H1 (cell line): ENCODE measurements at regions of chr9 and their contacts with region 1.

Region 1: GRCh38 chr9:97237951-97238851 is 69.3 kb upstream of the CCDC180 start:
- DNase-seq: peak in 1 of 2 experiments; percentile 86
- H3K4me3 ChIP-seq: peak overlapping the region; percentile 76 to 83 (median 80)
- H3K27ac ChIP-seq: peak overlapping the region; percentile 80
- H3K4me1 ChIP-seq: peaks cover 0 to 7% (median 2%) of the 10 kb centered on the region in 4 experiments; a peak in 3 of 7 replicates
- H3K27me3 ChIP-seq: no peaks in the 10 kb centered on the region
- CTCF ChIP-seq: no peak
- EP300 ChIP-seq: no peak
- POLR2A ChIP-seq: peak in 1 of 2 experiments; percentile 86; a peak in 2 of 3 replicates
- RAD21 ChIP-seq: no peak

Region 2: GRCh38 chr9:97271292-97271691 is 33.1 kb after region 1 on chr9:
- CTCF ChIA-PET with region 1: interaction called, 3 read pairs
- POLR2A ChIA-PET with region 1: interaction called, 14 read pairs
- DNase-seq: peak in 1 of 2 experiments; percentile 68
- H3K4me3 ChIP-seq: peak overlapping the region in 2 of 4 experiments; percentile 29 to 47; a peak in 4 of 8 replicates
- H3K27ac ChIP-seq: no peak overlapping the region
- H3K4me1 ChIP-seq: peaks cover 2 to 5% (median 3%) of the 10 kb centered on the region in 4 experiments
- H3K27me3 ChIP-seq: no peaks in the 10 kb centered on the region
- CTCF ChIP-seq: no peak
- EP300 ChIP-seq: no peak
- POLR2A ChIP-seq: no peak
- RAD21 ChIP-seq: no peak

Region 3: DNA sequence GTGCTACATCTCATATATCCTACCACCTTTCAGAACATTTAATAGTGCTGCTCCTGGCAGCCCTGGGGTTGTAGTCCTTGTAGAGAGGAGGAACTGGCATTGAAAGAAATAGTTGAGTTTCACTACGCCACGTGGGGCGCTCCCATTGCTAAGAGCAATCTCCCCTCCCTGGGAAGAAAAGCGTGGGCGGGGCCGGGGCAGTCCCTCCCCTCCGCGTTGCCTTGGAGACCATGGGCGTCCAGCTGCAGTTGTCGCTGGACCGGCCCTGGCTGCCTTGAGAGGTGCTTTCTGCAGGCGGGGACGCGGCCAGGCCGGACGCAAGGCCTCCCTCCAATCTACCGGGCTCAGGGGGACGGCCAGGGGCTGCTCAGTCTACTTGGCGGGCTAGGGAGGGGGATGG is 68.9 kb after region 1 on chr9:
- CTCF ChIA-PET with region 1: no interaction called
- POLR2A ChIA-PET with region 1: interaction called, 11 read pairs
- DNase-seq: peak; percentile 71 to 97
- H3K4me3 ChIP-seq: peak overlapping the region in 1 of 4 experiments; percentile 26; a peak in 1 of 8 replicates
- H3K27ac ChIP-seq: no peak overlapping the region; the same call in 1 of the 2 replicates
- H3K4me1 ChIP-seq: peaks cover 0 to 11% (median 4%) of the 10 kb centered on the region in 4 experiments; a peak in 5 of 7 replicates
- H3K27me3 ChIP-seq: no peaks in the 10 kb centered on the region
- CTCF ChIP-seq: peak in 2 of 3 experiments; percentile 34 to 57; a peak in 2 of 4 replicates
- EP300 ChIP-seq: no peak
- POLR2A ChIP-seq: 0 out of 3 replicates have a peak, but pooled peaks of 1 of the 2 experiments have one; percentile 35
- RAD21 ChIP-seq: peak in 1 of 2 experiments; percentile 9; a peak in 2 of 4 replicates